ENCODE measurements at regions of chr10 and their contacts with region 1.

Region 1: DNA sequence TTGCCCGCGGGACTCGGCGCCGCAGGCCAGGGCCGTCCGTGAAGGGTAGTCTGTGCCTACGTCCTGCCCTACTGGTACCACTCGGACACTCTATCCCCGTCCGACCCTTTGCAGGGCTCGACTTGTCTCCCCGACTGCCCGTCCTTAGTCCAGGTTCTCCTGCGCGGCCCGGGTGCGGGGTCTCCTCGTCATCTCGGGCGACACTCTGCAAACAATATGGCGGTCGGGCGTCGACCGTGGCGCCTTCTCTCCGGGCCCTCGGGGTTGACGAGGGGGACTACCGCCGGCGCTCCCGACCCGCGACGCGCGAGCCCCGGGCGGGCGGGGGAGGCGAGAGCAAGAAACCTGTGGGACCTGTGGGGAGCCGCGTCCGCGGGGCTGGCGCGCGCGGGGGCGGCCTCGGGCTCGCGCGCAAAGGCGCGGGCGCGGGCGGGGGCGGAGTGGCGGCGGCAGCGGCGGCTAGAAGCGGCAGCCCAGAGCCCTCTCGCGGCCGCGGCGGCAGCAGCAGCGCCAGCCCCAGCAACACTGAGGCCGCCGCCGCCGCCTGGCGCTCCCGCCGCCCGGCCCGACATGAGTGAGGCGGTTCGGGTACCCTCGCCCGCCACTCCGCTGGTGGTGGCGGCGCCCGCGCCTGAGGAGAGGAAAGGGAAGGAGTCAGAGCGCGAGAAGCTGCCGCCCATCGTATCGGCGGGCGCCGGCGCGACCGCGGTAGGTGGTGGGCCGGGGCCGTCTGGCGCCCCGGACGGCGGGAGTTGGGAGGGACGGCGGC is at the start of gene HECTD2:
- DNase-seq: peak; percentile 88
- H3K4me3 ChIP-seq: peak within 1 kb of the TSS; percentile 67 to 90 (median 77)
- H3K27ac ChIP-seq: peak within 1 kb of the TSS; percentile 93 to 99 (median 98)
- H3K4me1 ChIP-seq: peaks cover 0 to 30% (median 13%) of the 10 kb centered on the region in 4 donors
- H3K27me3 ChIP-seq: no peaks in the 10 kb centered on the region
- CTCF ChIP-seq: peak in 1 of 4 experiments; percentile 34
- EP300 ChIP-seq: no peak
- POLR2A ChIP-seq: peak in 1 of 2 donors; percentile 6
- total RNA-seq, gene HECTD2: 25.5 to 29.3 (median 27.9) TPM

Region 2: DNA sequence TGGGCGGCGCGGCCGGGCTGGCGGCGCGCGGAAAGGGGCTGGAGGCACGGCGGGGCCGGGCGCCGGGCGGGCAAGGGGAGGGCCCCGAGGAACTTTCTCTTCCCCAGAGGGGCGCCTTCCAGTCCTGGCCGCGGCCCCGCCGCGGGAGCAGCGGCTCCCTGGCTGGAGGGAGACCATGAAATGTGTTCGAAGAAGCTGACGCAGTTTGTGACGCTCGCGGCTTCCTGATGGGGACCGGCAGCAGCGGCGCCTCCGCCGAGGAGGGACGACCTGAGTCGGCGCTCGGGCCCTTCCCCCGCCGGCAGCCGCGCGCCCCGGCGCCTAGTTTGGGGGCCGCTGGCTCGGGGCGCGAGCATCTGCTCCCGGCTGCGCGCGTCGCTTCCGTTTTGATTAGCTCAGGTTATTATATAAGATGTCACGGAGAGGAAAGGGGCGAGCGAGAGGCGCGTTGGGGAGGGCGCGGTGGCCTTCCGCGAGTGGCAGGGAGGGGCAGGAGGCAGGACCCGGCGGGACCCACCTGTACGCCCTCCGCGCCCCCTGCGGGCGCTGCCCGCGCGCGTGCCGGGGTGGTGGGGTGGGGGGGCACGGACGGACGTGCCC is 246.7 kb before region 1 on chr10:
- intact Hi-C with region 1: loop called (anchors 5 kb)
- DNase-seq: peak; percentile 81
- H3K4me3 ChIP-seq: peak overlapping the region; percentile 81 to 91 (median 90)
- H3K27ac ChIP-seq: peak overlapping the region; percentile 93 to 98 (median 96)
- H3K4me1 ChIP-seq: peaks cover 0 to 24% (median 16%) of the 10 kb centered on the region in 4 donors
- H3K27me3 ChIP-seq: no peaks in the 10 kb centered on the region
- CTCF ChIP-seq: no peak
- EP300 ChIP-seq: no peak
- POLR2A ChIP-seq: no peak

Region 3: DNA sequence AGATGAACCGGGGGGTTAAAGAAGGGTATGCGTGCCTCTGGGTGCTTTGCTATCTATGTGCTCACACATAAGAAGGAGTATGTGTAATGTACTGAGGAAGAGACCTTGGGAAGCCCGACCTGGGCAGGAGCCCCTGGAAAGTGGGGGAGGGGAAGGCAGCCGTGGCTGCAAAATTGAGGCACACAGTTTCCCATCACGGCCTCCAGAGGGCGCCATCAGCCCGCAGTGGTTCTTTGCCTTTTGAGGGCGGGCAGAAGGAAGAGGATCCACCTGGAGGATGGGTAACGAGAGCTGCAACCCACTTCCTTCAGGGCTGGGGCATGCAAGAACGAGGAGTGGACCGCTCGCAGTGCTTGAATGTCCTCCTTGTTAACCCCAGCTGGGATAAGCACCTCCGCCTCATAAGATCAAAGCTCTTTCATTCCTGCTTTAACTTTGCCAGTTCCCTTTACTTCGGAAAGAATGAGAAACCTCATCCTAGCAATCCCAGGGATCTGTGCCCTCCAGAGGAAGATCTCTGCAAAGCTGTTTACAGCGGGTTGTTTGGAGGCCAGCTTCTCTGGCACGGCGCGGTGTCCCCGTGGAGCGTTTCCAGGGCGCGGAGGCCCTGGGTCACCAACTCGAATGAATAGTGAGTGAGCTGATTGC is 111.7 kb before region 1 on chr10:
- intact Hi-C with region 1: loop called (anchors 5 kb)
- DNase-seq: peak; percentile 80
- H3K4me3 ChIP-seq: peak overlapping the region; percentile 9 to 49 (median 36)
- H3K27ac ChIP-seq: peak overlapping the region; percentile 26 to 63 (median 40)
- H3K4me1 ChIP-seq: peaks cover 0 to 12% (median 11%) of the 10 kb centered on the region in 4 donors
- H3K27me3 ChIP-seq: no peaks in the 10 kb centered on the region
- CTCF ChIP-seq: peak; percentile 64 to 90 (median 84)
- EP300 ChIP-seq: no peak
- POLR2A ChIP-seq: no peak

Region 4: DNA sequence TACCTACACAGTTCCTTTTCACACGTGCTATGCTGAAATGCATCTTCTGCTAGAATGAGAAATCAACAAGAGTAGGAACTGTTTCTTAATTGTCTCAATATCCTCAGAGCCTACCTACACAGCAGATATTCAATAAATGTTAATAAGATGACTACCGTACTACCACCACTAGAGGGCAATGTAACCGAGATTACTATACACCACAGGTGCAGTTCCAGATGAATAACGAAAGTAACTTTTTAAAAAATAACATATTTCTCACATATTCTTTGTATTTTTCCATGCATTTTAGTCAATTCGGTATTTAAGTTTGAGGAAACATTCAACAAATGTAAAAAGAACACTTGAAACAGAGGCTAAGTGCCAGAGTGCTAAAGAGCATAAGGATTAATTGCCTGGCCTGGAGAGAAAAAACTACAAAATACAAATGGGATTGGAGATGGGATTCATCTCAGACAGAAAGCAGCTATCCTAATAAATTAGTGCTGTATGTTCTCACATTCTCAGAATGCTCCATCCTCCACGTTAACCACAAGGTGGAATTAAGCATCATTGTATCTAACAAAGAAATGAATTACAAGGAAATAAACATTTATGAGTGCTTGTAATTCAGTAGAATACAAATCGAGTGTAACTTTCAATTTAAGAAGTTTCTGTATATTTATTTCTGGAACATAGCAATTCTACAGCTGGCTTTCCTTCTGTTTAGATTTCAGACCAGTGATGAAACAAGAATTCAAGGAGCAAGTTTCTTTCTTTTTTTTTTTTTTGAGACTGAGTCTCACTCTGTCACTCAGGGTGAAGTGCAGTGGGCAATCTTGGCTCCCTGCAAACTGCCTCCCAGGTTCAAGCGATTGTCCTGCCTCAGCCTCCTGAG is 20.2 kb before region 1 on chr10:
- intact Hi-C with region 1: loop called (anchors 2 kb)
- DNase-seq: no peak
- H3K4me3 ChIP-seq: peak overlapping the region in 3 of 4 donors; percentile 12 to 23 (median 19)
- H3K27ac ChIP-seq: peak overlapping the region; percentile 8 to 63 (median 41)
- H3K4me1 ChIP-seq: peaks cover 0 to 10% (median 4%) of the 10 kb centered on the region in 4 donors
- H3K27me3 ChIP-seq: no peaks in the 10 kb centered on the region
- CTCF ChIP-seq: peak; percentile 24 to 66 (median 58)
- EP300 ChIP-seq: no peak
- POLR2A ChIP-seq: no peak

Region 5: DNA sequence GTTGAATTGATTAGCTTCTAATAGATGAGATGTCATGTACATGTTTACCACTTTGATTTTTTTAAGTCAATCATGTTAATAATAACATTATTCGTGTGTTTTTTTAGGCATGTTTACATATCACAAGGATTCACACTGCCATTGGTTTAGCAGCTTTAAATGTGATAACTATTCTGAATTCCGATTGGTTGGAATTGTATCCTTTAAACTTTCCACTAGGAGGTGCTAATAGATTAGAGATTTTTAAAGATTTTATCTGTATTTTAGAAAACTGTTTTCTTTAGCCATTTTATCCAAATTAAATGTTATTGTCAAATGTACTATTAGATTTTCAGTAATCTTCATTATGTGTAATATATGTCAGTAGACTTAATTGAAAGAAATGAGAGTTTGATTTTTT is 83.3 kb after region 1 on chr10:
- intact Hi-C with region 1: loop called (anchors 5 kb)
- DNase-seq: no peak
- H3K4me3 ChIP-seq: no peak overlapping the region
- H3K27ac ChIP-seq: no peak overlapping the region
- H3K4me1 ChIP-seq: no peaks in the 10 kb centered on the region
- H3K27me3 ChIP-seq: no peaks in the 10 kb centered on the region
- CTCF ChIP-seq: peak; percentile 27 to 55 (median 42)
- EP300 ChIP-seq: no peak
- POLR2A ChIP-seq: no peak

Region 6: DNA sequence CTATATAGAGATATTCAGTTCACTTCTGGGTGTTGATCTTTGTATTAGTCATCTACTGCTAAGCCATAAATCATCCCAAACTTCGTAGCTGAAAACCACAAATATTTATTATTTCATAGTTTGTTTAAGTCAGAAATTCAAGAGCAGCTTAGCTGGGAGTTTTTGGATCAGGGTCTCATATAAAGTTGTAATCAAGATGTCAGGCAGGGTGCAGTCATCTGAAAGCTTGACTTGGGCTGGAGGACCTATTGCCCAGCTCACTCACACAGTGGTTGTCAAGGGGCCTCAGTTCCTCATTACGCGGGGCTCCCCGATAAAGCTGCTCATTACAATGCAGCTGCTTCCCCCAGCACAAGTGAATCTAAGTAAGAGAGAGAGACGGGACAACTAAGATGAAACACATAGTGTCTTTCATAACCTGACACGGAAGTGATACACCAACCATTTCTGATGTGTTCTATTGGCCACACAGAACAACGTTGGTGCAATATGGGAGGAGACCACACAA is 207.1 kb after region 1 on chr10:
- intact Hi-C with region 1: no loop called
- DNase-seq: no peak
- H3K4me3 ChIP-seq: no peak overlapping the region
- H3K27ac ChIP-seq: peak overlapping the region in 3 of 4 donors; percentile 11 to 51 (median 39)
- H3K4me1 ChIP-seq: peaks cover 0 to 24% (median 19%) of the 10 kb centered on the region in 4 donors
- H3K27me3 ChIP-seq: no peaks in the 10 kb centered on the region
- CTCF ChIP-seq: no peak
- EP300 ChIP-seq: no peak
- POLR2A ChIP-seq: no peak

Region 7: GRCh38 chr10:91797874-91798648 is 388.0 kb after region 1 on chr10 and contains the start of gene TNKS2:
- intact Hi-C with region 1: loop called (anchors 5 kb)
- DNase-seq: peak; percentile 96
- H3K4me3 ChIP-seq: peak within 1 kb of the TSS; percentile 74 to 97 (median 92)
- H3K27ac ChIP-seq: peak within 1 kb of the TSS; percentile 96 to 99 (median 98)
- H3K4me1 ChIP-seq: peaks cover 0 to 48% (median 41%) of the 10 kb centered on the region in 4 donors
- H3K27me3 ChIP-seq: no peaks in the 10 kb centered on the region
- CTCF ChIP-seq: no peak
- EP300 ChIP-seq: peak in 1 of 4 donors; percentile 26
- POLR2A ChIP-seq: peak; percentile 83 to 85
- total RNA-seq, gene TNKS2: 37.4 to 46.7 (median 40.5) TPM

Region 8: GRCh38 chr10:91908337-91909116 is 498.5 kb after region 1 on chr10:
- intact Hi-C with region 1: loop called (anchors 10 kb)
- DNase-seq: peak; percentile 82
- H3K4me3 ChIP-seq: peak overlapping the region; percentile 60 to 85 (median 72)
- H3K27ac ChIP-seq: peak overlapping the region; percentile 65 to 74 (median 70)
- H3K4me1 ChIP-seq: peaks cover 0 to 9% (median 6%) of the 10 kb centered on the region in 4 donors
- H3K27me3 ChIP-seq: no peaks in the 10 kb centered on the region
- CTCF ChIP-seq: peak in 1 of 4 experiments; percentile 9
- EP300 ChIP-seq: no peak
- POLR2A ChIP-seq: no peak

Region 9: DNA sequence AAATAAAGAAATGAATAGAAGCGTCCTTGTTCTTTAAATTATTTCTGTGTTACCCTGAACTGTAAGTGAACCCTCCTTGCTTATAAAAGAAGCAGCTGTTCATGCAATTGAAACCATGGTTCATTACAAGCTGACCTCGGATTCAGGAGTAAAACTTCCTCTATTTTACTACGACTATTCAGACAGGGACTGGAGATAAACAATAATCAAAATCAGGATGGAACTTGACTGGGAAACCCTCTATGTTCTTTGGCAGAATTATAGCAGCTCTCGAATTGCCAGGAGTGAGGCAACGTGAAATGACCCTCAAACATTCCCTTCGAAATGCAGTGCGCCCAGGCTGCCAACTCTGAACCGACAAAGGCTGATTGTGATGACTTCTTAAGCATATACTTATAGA is 1835.7 kb after region 1 on chr10:
- intact Hi-C with region 1: no loop called
- DNase-seq: no peak
- H3K4me3 ChIP-seq: no peak overlapping the region
- H3K27ac ChIP-seq: no peak overlapping the region
- H3K4me1 ChIP-seq: no peaks in the 10 kb centered on the region
- H3K27me3 ChIP-seq: no peaks in the 10 kb centered on the region
- CTCF ChIP-seq: no peak
- EP300 ChIP-seq: no peak
- POLR2A ChIP-seq: no peak

Measured in sigmoid colon (tissue), 7 donors.